PC-9 (cell line): ENCODE measurements at regions of chr1 and their contacts with region 1.

Region 1: GRCh38 chr1:80436851-80437250 is 1363.9 kb upstream of the ADGRL2 start:
- DNase-seq: no peak
- H3K4me3 ChIP-seq: no peak overlapping the region
- H3K27ac ChIP-seq: no peak overlapping the region
- H3K4me1 ChIP-seq: no peaks in the 10 kb centered on the region
- H3K27me3 ChIP-seq: no peaks in the 10 kb centered on the region
- CTCF ChIP-seq: no peak

Region 2: DNA sequence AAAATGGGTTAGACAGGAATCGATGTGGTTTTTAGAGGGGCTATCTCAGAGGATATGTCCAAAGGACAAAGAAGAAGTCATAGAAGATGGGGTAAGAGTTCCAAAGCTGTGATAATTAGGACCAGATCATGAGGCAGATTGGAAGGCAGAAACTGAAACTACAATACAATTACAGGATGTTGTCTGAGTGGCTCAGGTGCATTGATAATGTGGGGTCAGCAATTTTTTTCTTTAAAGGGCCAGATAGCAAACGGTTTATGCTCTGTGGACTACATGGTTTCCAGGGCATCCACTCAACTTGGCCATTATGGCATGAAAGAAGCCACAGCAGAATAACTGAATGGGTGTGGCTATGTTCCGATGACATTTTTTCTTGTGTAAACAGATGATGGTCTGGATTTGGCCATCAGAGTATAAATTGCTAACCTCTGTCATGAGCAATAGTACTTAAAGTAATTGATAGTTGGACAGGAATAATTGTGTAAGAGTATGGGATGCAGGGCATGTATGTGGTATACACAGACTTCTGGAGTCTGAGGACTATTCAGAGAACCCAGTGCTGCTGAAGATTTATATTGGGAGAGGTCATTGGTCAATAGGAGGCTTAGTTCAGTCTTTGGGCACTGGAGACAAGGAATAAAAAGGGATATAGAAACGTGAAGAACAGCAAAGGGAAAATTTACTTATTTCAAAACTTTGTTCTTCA is 1231.9 kb before region 1 on chr1:
- CTCF ChIA-PET with region 1: no interaction called
- POLR2A ChIA-PET with region 1: no interaction called
- intact Hi-C with region 1: loop called (anchors 5 kb)
- DNase-seq: no peak
- H3K4me3 ChIP-seq: no peak overlapping the region
- H3K27ac ChIP-seq: no peak overlapping the region
- H3K4me1 ChIP-seq: no peaks in the 10 kb centered on the region
- H3K27me3 ChIP-seq: no peaks in the 10 kb centered on the region
- CTCF ChIP-seq: no peak

Region 3: DNA sequence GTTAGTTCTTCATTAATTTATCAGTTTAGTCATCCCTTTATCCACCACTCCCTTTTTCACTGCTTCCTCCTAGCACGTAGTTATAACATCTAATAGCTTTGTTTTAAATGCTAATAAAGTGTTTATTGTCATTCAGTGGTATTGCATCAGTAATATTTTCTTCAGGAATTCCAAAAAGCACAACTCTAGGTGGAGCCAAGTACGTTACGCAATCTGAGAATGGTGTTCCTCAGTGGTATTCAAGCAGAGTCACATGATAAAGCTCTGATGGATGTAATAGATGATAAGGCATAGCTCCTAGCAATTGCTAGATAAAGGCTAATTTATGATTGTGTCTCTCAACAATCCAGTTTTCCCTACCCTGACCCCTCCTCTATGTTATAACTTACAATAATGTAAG is 935.7 kb before region 1 on chr1:
- CTCF ChIA-PET with region 1: no interaction called
- POLR2A ChIA-PET with region 1: no interaction called
- intact Hi-C with region 1: no loop called
- DNase-seq: no peak
- H3K4me3 ChIP-seq: no peak overlapping the region
- H3K27ac ChIP-seq: no peak overlapping the region
- H3K4me1 ChIP-seq: no peaks in the 10 kb centered on the region
- H3K27me3 ChIP-seq: no peaks in the 10 kb centered on the region
- CTCF ChIP-seq: no peak

Region 4: GRCh38 chr1:80403472-80403893 is 33.4 kb before region 1 on chr1:
- CTCF ChIA-PET with region 1: no interaction called
- POLR2A ChIA-PET with region 1: no interaction called
- intact Hi-C with region 1: no loop called
- DNase-seq: no peak
- H3K4me3 ChIP-seq: no peak overlapping the region
- H3K27ac ChIP-seq: no peak overlapping the region
- H3K4me1 ChIP-seq: no peaks in the 10 kb centered on the region
- H3K27me3 ChIP-seq: no peaks in the 10 kb centered on the region
- CTCF ChIP-seq: no peak